Tibial artery (tissue), 4 donors: ENCODE measurements at regions of chr4 and their contacts with region 1.

Region 1: DNA sequence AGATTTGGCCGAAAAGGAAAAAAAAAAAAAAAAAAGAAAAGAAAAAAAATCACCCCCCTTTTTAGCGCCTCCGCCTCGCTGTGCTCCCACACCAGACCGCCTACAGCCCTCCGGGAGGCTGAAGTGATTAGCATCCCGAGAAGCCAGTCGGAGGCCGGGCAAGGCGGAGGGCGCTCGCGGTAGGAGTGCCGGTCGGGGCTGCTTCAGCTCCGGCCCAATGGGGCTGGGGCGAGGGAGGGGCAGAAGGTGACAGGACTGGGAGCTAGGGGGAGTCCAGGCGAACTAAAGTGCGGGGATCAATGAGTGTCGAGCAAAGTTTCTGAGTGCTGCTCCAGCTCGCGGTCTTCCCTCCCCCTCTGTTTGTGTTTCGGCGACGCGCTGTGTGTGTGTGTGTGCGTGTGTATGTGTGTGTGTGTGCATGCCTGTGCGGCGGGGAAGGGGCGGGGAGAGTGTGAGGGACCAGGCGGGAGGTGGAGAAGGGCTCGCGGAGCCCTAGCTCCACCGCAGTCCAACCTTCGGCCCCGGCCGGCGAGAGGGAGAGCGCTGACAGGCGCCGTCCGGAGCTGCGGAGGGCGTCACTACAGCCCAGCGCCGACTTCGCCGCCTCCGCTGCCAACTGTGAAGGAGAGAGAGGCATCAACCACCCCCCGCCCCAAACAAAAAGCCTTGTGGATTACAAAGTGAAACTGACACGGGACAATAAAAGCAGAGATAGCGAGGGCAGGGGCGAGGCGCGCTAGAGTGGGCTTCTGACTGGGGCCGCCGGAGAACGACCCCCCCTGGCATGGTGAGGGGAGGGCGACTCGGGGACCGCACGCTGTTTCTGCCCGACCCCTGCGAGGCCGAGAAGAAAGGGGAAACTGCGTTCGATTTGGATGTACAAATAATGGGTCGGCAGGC is at the start of gene FAT4:
- DNase-seq: peak; percentile 96 to 98
- H3K4me3 ChIP-seq: peak within 1 kb of the TSS; percentile 83 to 99
- H3K27ac ChIP-seq: peak within 1 kb of the TSS; percentile 93 to 99
- H3K4me1 ChIP-seq: peaks cover 0 to 34% (median 24%) of the 10 kb centered on the region in 4 donors
- H3K27me3 ChIP-seq: no peaks in the 10 kb centered on the region
- CTCF ChIP-seq: peak in 1 of 2 experiments; percentile 18

Region 2: DNA sequence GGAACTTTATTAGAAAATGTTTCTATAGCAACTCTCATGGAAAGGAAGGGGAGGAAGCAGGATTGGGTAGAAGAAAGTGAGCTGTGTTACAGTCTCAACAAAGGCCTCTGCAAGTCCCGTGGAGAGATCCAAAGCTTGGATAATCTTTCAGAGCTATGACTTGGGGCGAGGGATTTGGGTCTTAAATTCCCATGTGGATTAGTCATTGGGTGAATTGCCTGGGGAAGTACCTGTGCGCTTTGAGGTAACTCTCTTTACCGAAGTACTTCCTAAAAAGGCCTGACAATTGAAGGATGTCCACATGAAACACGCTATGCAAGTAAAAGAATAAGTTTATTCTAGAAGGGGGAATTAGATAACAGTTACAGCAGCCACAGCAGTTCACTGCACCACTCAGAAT is 468.6 kb before region 1 on chr4:
- intact Hi-C with region 1: no loop called
- DNase-seq: no peak
- H3K4me3 ChIP-seq: no peak overlapping the region
- H3K27ac ChIP-seq: no peak overlapping the region
- H3K4me1 ChIP-seq: no peaks in the 10 kb centered on the region
- H3K27me3 ChIP-seq: no peaks in the 10 kb centered on the region
- CTCF ChIP-seq: no peak

Region 3: DNA sequence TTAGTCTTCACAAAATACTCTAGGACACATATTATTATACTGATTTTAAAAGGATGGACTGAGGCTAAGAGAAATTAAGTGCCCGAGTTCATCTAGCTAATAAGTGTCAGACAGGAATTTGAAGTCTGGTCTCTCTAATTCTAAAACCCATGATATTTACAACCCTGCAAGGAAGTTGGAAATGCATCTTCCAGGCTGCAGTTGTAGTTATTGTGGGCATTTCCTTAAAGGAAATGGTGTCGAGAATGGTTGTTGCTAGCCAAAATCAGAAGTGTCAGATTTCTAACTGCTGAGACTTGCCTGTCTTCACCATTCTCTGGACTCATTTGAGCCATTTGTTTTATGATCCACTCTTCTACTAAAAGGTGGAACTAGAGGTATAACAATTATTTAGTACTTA is 82.3 kb after region 1 on chr4:
- intact Hi-C with region 1: loop called (anchors 5 kb)
- DNase-seq: no peak
- H3K4me3 ChIP-seq: no peak overlapping the region
- H3K27ac ChIP-seq: peak overlapping the region; percentile 21 to 36
- H3K4me1 ChIP-seq: peaks cover 0 to 86% (median 16%) of the 10 kb centered on the region in 4 donors
- H3K27me3 ChIP-seq: no peaks in the 10 kb centered on the region
- CTCF ChIP-seq: no peak

Region 4: GRCh38 chr4:125741825-125742452 is 427.0 kb after region 1 on chr4:
- intact Hi-C with region 1: loop called (anchors 2 kb)
- DNase-seq: no peak
- H3K4me3 ChIP-seq: no peak overlapping the region
- H3K27ac ChIP-seq: no peak overlapping the region
- H3K4me1 ChIP-seq: peaks cover 0 to 10% (median 3%) of the 10 kb centered on the region in 4 donors
- H3K27me3 ChIP-seq: no peaks in the 10 kb centered on the region
- CTCF ChIP-seq: peak; percentile 64 to 74